Endothelial cell of umbilical vein (primary cell): ENCODE measurements at regions of chr2 and their contacts with region 1.

Region 1: GRCh38 chr2:207133820-207134519 is 31.8 kb downstream of the KLF7 start:
- DNase-seq: peak; percentile 86
- H3K4me3 ChIP-seq: peak overlapping the region in 1 of 3 experiments; percentile 42
- H3K27ac ChIP-seq: peak overlapping the region; percentile 94
- H3K4me1 ChIP-seq: peaks cover 83% of the 10 kb centered on the region
- H3K27me3 ChIP-seq: no peaks in the 10 kb centered on the region
- CTCF ChIP-seq: no peak
- POLR2A ChIP-seq: peak; percentile 42

Region 2: DNA sequence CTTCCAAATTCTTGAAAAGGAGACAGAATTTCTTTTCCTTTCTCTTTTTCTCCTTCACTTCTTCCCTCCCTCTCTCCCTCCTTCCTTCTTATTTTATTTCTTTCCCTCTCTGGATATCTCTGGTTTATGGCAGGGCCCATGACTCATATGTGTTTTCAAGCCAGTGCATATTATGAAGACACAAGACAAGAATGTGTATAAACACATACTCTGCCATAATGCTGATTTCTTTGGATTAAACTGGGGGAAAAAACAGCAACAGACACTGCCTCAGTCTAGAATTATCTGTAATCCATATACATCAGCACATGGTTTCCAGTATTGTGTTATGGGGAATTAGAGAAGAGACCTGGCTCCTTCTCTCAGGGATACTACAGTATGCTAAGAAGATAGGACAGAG is 277.5 kb before region 1 on chr2:
- CTCF ChIA-PET with region 1: no interaction called
- POLR2A ChIA-PET with region 1: no interaction called
- dilution Hi-C with region 1: no loop called
- intact Hi-C with region 1: no loop called
- DNase-seq: no peak
- H3K4me3 ChIP-seq: no peak overlapping the region
- H3K27ac ChIP-seq: no peak overlapping the region
- H3K4me1 ChIP-seq: no peaks in the 10 kb centered on the region
- H3K27me3 ChIP-seq: no peaks in the 10 kb centered on the region
- CTCF ChIP-seq: no peak
- POLR2A ChIP-seq: no peak

Region 3: DNA sequence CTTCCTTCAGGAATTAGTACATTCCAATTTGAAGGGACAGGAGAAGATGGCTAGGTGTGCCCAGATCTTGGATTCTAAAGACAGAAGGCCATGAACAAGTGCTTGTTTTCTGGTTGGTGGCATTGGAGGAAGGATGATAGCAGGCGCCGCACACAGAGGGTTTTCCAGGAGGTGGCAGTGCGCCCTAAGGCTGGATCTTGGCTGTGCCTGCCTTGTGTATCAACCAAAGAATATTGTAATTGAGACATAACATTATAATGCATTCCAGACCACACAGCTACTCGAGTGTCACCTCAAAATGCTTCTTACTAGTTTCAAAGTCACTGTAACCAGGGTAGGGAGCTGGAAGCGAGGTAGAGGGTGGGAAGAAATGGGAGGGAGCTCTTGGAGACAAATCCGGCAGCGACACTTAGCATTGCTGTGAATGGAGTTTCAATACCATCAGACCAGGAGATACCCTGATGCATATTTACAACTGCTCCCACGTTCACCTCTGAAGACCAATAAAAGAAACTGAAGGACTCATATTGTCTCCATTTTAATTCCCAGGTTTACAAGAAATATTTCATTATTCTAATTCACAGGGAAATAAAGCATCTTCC is 152.1 kb before region 1 on chr2:
- CTCF ChIA-PET with region 1: interaction called, 5 read pairs
- POLR2A ChIA-PET with region 1: no interaction called
- dilution Hi-C with region 1: no loop called
- intact Hi-C with region 1: loop called (anchors 10 kb)
- DNase-seq: peak; percentile 79
- H3K4me3 ChIP-seq: no peak overlapping the region
- H3K27ac ChIP-seq: no peak overlapping the region
- H3K4me1 ChIP-seq: no peaks in the 10 kb centered on the region
- H3K27me3 ChIP-seq: peaks cover 0 to 5% of the 10 kb centered on the region in 2 experiments
- CTCF ChIP-seq: peak; percentile 83 to 88
- POLR2A ChIP-seq: no peak

Region 4: DNA sequence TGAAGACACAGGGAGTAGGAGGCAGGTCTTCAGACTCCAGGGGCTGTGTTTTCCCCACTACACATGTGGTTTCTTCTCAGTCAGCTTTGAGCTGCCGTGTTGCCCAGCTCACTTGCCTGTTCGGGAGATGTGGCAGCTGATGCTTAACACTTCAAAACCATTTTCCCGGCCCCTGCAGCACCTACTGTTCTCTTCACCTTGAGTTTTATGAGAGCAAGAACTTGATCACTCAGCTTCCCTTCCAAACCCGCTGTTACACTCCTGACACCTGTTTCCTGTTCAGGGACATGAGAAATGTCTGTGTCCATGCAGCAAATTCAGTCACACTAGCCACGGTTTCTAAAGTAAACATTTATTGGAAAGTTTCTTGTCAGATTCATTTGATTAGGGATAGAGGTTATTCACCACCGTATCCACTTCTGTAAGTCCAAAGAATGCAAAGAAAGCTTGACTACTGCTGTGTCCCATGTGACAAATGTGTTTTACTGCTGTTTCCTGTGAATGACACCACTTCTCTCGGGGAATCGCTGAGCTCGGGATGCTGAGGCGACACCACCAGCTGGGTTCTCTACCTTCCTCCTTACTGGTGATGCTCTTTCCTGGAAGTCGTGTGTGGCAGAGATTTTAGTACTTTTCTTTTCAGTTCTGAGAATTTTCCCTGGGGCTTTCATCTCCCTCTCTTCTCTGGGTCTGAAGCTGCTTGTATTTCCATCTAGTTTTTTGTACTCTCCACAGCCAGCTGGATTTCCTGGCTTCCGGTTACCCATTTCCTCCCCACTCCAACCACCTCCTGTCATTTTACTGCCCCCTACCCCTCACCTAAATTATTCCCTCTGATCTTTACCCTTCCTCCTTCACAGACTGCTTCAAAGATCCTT is 59.9 kb before region 1 on chr2:
- CTCF ChIA-PET with region 1: no interaction called
- POLR2A ChIA-PET with region 1: no interaction called
- dilution Hi-C with region 1: no loop called
- intact Hi-C with region 1: loop called (anchors 2 kb)
- DNase-seq: peak; percentile 70
- H3K4me3 ChIP-seq: peak overlapping the region in 2 of 3 experiments; percentile 2 to 12
- H3K27ac ChIP-seq: peak overlapping the region; percentile 22
- H3K4me1 ChIP-seq: peaks cover 23% of the 10 kb centered on the region
- H3K27me3 ChIP-seq: no peaks in the 10 kb centered on the region
- CTCF ChIP-seq: no peak
- POLR2A ChIP-seq: peak; percentile 63

Region 5: GRCh38 chr2:207115715-207116364 is 18.1 kb before region 1 on chr2:
- CTCF ChIA-PET with region 1: interaction called, 15 read pairs
- POLR2A ChIA-PET with region 1: no interaction called
- dilution Hi-C with region 1: no loop called
- intact Hi-C with region 1: loop called (anchors 1 kb)
- DNase-seq: peak; percentile 36
- H3K4me3 ChIP-seq: no peak overlapping the region
- H3K27ac ChIP-seq: no peak overlapping the region
- H3K4me1 ChIP-seq: peaks cover 17% of the 10 kb centered on the region
- H3K27me3 ChIP-seq: no peaks in the 10 kb centered on the region
- CTCF ChIP-seq: peak; percentile 3 to 4
- POLR2A ChIP-seq: peak; percentile 43

Region 6: GRCh38 chr2:207121784-207122183 is 12.2 kb before region 1 on chr2:
- CTCF ChIA-PET with region 1: interaction called, 15 read pairs
- POLR2A ChIA-PET with region 1: no interaction called
- dilution Hi-C with region 1: no loop called
- intact Hi-C with region 1: loop called (anchors 1 kb)
- DNase-seq: peak; percentile 82
- H3K4me3 ChIP-seq: no peak overlapping the region
- H3K27ac ChIP-seq: peak overlapping the region; percentile 49
- H3K4me1 ChIP-seq: peaks cover 39% of the 10 kb centered on the region
- H3K27me3 ChIP-seq: no peaks in the 10 kb centered on the region
- CTCF ChIP-seq: no peak
- POLR2A ChIP-seq: peak; percentile 17